ENCODE measurements at regions of chr4 and their contacts with region 1.

Region 1: GRCh38 chr4:125314676-125315575 is at the start of gene FAT4:
- DNase-seq: peak; percentile 12 to 35 (median 23)
- ATAC-seq: peak; percentile 86
- H3K4me3 ChIP-seq: no peak within 1 kb of the TSS
- H3K27ac ChIP-seq: no peak within 1 kb of the TSS
- H3K4me1 ChIP-seq: peaks cover 0 to 24% of the 10 kb centered on the region in 2 experiments; a peak in 2 of 5 replicates
- H3K27me3 ChIP-seq: peaks cover 0 to 13% of the 10 kb centered on the region in 2 experiments; a peak in 2 of 5 replicates
- CTCF ChIP-seq: no peak
- EP300 ChIP-seq: no peak
- POLR2A ChIP-seq: no peak
- RAD21 ChIP-seq: no peak
- polyA plus RNA-seq, gene FAT4: not detected

Region 2: GRCh38 chr4:125244848-125245450 is 70.0 kb before region 1 on chr4:
- CTCF ChIA-PET with region 1: no interaction called
- POLR2A ChIA-PET with region 1: no interaction called
- in situ Hi-C with region 1: no loop called
- intact Hi-C with region 1: no loop called
- DNase-seq: no peak
- ATAC-seq: no peak
- H3K4me3 ChIP-seq: no peak overlapping the region
- H3K27ac ChIP-seq: no peak overlapping the region
- H3K4me1 ChIP-seq: no peaks in the 10 kb centered on the region
- H3K27me3 ChIP-seq: no peaks in the 10 kb centered on the region
- CTCF ChIP-seq: peak in 1 of 3 experiments; percentile 14; a peak in 1 of 6 replicates
- EP300 ChIP-seq: no peak
- POLR2A ChIP-seq: no peak
- RAD21 ChIP-seq: peak in 1 of 2 experiments; percentile 17; a peak in 1 of 4 replicates

Region 3: GRCh38 chr4:125741825-125742452 is 427.0 kb after region 1 on chr4:
- CTCF ChIA-PET with region 1: no interaction called
- POLR2A ChIA-PET with region 1: no interaction called
- in situ Hi-C with region 1: loop called (anchors 25 kb)
- intact Hi-C with region 1: loop called (anchors 5 kb)
- DNase-seq: peak in 2 of 4 experiments; percentile 11 to 13
- ATAC-seq: no peak
- H3K4me3 ChIP-seq: no peak overlapping the region
- H3K27ac ChIP-seq: no peak overlapping the region
- H3K4me1 ChIP-seq: no peaks in the 10 kb centered on the region
- H3K27me3 ChIP-seq: no peaks in the 10 kb centered on the region
- CTCF ChIP-seq: peak in 1 of 3 experiments; percentile 31; a peak in 2 of 6 replicates
- EP300 ChIP-seq: no peak
- POLR2A ChIP-seq: no peak
- RAD21 ChIP-seq: 0 out of 4 replicates have a peak, but pooled peaks of 1 of the 2 experiments have one; percentile 22

Region 4: GRCh38 chr4:125750828-125751466 is 436.0 kb after region 1 on chr4:
- CTCF ChIA-PET with region 1: no interaction called
- POLR2A ChIA-PET with region 1: no interaction called
- in situ Hi-C with region 1: loop called (anchors 25 kb)
- intact Hi-C with region 1: loop called (anchors 1 kb)
- DNase-seq: peak in 1 of 4 experiments; percentile 3
- ATAC-seq: no peak
- H3K4me3 ChIP-seq: no peak overlapping the region
- H3K27ac ChIP-seq: no peak overlapping the region
- H3K4me1 ChIP-seq: no peaks in the 10 kb centered on the region
- H3K27me3 ChIP-seq: no peaks in the 10 kb centered on the region
- CTCF ChIP-seq: no peak
- EP300 ChIP-seq: no peak
- POLR2A ChIP-seq: no peak
- RAD21 ChIP-seq: no peak

Region 5: GRCh38 chr4:125979950-125980349 is 665.0 kb after region 1 on chr4:
- CTCF ChIA-PET with region 1: no interaction called
- POLR2A ChIA-PET with region 1: no interaction called
- in situ Hi-C with region 1: no loop called
- intact Hi-C with region 1: loop called (anchors 10 kb)
- DNase-seq: peak in 1 of 4 experiments; percentile 6
- ATAC-seq: peak; percentile 68
- H3K4me3 ChIP-seq: no peak overlapping the region
- H3K27ac ChIP-seq: no peak overlapping the region
- H3K4me1 ChIP-seq: no peaks in the 10 kb centered on the region; a peak in 1 of 5 replicates
- H3K27me3 ChIP-seq: no peaks in the 10 kb centered on the region
- CTCF ChIP-seq: no peak
- EP300 ChIP-seq: no peak
- POLR2A ChIP-seq: no peak
- RAD21 ChIP-seq: no peak

Region 6: GRCh38 chr4:126395664-126396063 is 1080.7 kb after region 1 on chr4:
- CTCF ChIA-PET with region 1: no interaction called
- POLR2A ChIA-PET with region 1: no interaction called
- in situ Hi-C with region 1: no loop called
- intact Hi-C with region 1: loop called (anchors 1 kb)
- DNase-seq: no peak
- ATAC-seq: peak; percentile 61
- H3K4me3 ChIP-seq: no peak overlapping the region
- H3K27ac ChIP-seq: no peak overlapping the region
- H3K4me1 ChIP-seq: no peaks in the 10 kb centered on the region
- H3K27me3 ChIP-seq: no peaks in the 10 kb centered on the region
- CTCF ChIP-seq: no peak
- EP300 ChIP-seq: no peak
- POLR2A ChIP-seq: no peak
- RAD21 ChIP-seq: no peak